Activated CD4-positive, alpha-beta T cell treated with anti-CD3 and anti-CD28 coated beads for 36 hours (primary cell): ENCODE measurements at regions of chr4 and their contacts with region 1.

Region 1: GRCh38 chr4:185005216-185005819 is 13.0 kb upstream of the HELT start:
- DNase-seq: peak; percentile 91
- ATAC-seq: peak; percentile 98
- H3K4me3 Mint-ChIP-seq: peak overlapping the region; percentile 31
- H3K27ac Mint-ChIP-seq: no peak overlapping the region
- H3K4me1 Mint-ChIP-seq: peaks cover 4% of the 10 kb centered on the region
- H3K27me3 Mint-ChIP-seq: peaks cover 39% of the 10 kb centered on the region

Region 2: DNA sequence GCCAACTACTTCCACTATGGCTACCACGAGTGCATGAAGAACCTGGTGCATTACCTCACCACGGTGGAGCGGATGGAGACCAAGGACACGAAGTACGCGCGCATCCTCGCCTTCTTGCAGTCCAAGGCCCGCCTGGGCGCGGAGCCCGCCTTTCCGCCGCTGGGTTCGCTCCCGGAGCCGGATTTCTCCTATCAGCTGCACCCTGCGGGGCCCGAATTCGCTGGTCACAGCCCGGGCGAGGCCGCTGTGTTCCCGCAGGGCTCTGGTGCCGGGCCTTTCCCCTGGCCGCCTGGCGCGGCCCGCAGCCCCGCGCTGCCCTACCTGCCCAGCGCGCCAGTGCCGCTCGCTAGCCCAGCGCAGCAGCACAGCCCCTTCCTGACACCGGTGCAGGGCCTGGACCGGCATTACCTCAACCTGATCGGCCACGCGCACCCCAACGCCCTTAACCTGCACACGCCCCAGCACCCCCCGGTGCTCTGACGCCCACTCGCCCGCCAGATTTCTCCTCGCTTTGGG is 15.0 kb after region 1 on chr4:
- CTCF ChIA-PET with region 1: interaction called, 10 read pairs
- POLR2A ChIA-PET with region 1: no interaction called
- intact Hi-C with region 1: no loop called
- DNase-seq: peak; percentile 31
- ATAC-seq: no peak
- H3K4me3 Mint-ChIP-seq: no peak overlapping the region
- H3K27ac Mint-ChIP-seq: no peak overlapping the region
- H3K4me1 Mint-ChIP-seq: peaks cover 9% of the 10 kb centered on the region
- H3K27me3 Mint-ChIP-seq: peaks cover 68% of the 10 kb centered on the region

Region 3: DNA sequence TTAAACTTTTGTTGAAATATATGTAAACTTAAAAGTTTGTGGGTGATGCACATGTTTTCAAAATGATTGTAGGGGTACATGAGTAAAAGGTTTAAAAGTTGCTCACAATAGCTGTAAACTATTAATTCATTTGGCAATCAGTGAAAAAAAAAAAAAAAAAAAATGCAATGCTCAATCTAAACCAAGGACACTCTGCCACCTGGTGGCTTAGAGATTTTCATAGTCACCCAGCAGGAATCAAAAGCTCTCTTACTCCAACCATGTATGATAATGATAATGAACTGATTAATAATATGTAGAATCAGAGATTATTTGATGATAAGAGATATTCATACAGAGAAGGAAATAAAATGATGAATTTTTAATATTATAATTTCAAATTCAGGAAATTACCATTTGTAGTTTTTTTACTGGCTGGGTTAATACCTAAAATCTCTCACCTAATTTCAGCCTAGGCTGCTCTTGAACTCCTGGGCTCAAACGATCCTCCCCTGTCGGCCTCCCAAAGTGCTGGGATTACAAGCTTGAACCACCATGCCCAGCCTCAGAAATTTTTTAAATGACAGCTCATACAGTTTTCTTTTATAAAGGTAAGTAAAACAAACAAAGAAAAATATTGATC is 90.8 kb after region 1 on chr4:
- CTCF ChIA-PET with region 1: interaction called, 11 read pairs
- POLR2A ChIA-PET with region 1: no interaction called
- intact Hi-C with region 1: loop called (anchors 1 to 5 kb)
- DNase-seq: peak; percentile 41
- ATAC-seq: no peak
- H3K4me3 Mint-ChIP-seq: no peak overlapping the region
- H3K27ac Mint-ChIP-seq: no peak overlapping the region
- H3K4me1 Mint-ChIP-seq: no peaks in the 10 kb centered on the region
- H3K27me3 Mint-ChIP-seq: peaks cover 14% of the 10 kb centered on the region

Region 4: GRCh38 chr4:185142912-185143595 is 137.7 kb after region 1 on chr4 and contains the start of gene SLC25A4:
- CTCF ChIA-PET with region 1: no interaction called
- POLR2A ChIA-PET with region 1: no interaction called
- intact Hi-C with region 1: no loop called
- DNase-seq: peak; percentile 91
- ATAC-seq: peak; percentile 95
- H3K4me3 Mint-ChIP-seq: peak within 1 kb of the TSS; percentile 74
- H3K27ac Mint-ChIP-seq: peak within 1 kb of the TSS; percentile 70
- H3K4me1 Mint-ChIP-seq: peaks cover 10% of the 10 kb centered on the region
- H3K27me3 Mint-ChIP-seq: peaks cover 33% of the 10 kb centered on the region
- total RNA-seq, gene SLC25A4: 4.2 to 5.0 TPM

Region 5: GRCh38 chr4:185165605-185166063 is 160.3 kb after region 1 on chr4:
- CTCF ChIA-PET with region 1: no interaction called
- POLR2A ChIA-PET with region 1: no interaction called
- intact Hi-C with region 1: no loop called
- DNase-seq: peak; percentile 21
- ATAC-seq: peak; percentile 86
- H3K4me3 Mint-ChIP-seq: peak overlapping the region; percentile 6
- H3K27ac Mint-ChIP-seq: no peak overlapping the region
- H3K4me1 Mint-ChIP-seq: peaks cover 22% of the 10 kb centered on the region
- H3K27me3 Mint-ChIP-seq: peaks cover 6% of the 10 kb centered on the region

Region 6: DNA sequence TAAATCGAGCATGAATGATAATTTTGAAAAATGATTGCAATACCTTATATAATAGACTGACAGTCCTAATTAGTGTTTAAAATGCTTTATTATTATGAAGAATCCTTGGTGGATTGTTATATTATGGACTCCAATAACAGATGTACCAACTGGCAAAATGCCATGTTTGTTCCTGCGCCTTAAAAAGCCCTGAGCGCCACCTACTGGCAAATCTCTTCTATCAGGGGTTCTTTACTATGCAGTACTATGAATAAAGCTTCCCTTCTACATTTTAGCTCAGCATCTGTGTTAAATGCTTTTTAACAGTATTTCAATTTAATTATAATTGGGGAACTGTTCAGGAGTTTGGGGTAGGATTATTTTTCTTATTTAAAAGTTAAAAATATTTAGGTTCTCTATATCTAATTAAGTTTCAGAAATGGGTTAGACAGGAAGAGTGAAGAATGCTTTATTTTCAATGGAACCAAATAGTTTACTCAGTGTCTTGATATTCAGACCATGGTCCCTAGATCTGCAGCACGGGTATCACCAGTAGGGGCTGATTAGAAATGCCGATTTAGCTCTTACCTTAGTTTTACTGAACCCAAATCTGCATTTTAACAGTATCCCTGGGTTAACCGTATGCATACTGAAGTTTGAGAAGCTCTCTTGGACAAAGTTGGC is 178.4 kb after region 1 on chr4:
- CTCF ChIA-PET with region 1: no interaction called
- POLR2A ChIA-PET with region 1: no interaction called
- intact Hi-C with region 1: loop called in 1 of 2 experiments (anchors 1 kb)
- DNase-seq: peak; percentile 86
- ATAC-seq: peak; percentile 65
- H3K4me3 Mint-ChIP-seq: no peak overlapping the region
- H3K27ac Mint-ChIP-seq: no peak overlapping the region
- H3K4me1 Mint-ChIP-seq: peaks cover 34% of the 10 kb centered on the region
- H3K27me3 Mint-ChIP-seq: no peaks in the 10 kb centered on the region

Region 7: GRCh38 chr4:185597532-185598188 is 592.3 kb after region 1 on chr4:
- CTCF ChIA-PET with region 1: interaction called, 3 read pairs
- POLR2A ChIA-PET with region 1: no interaction called
- intact Hi-C with region 1: loop called in 1 of 2 experiments (anchors 10 kb)
- DNase-seq: peak; percentile 86
- ATAC-seq: peak; percentile 57
- H3K4me3 Mint-ChIP-seq: no peak overlapping the region
- H3K27ac Mint-ChIP-seq: no peak overlapping the region
- H3K4me1 Mint-ChIP-seq: peaks cover 3% of the 10 kb centered on the region
- H3K27me3 Mint-ChIP-seq: peaks cover 18% of the 10 kb centered on the region